ENCODE measurements at regions of chr13 and their contacts with region 1.

Region 1: GRCh38 chr13:41652727-41653361 is 195.5 kb downstream of the RGCC start:
- DNase-seq: peak; percentile 12 to 41
- H3K4me3 ChIP-seq: no peak overlapping the region
- H3K27ac ChIP-seq: no peak overlapping the region
- H3K4me1 ChIP-seq: peaks cover 21% of the 10 kb centered on the region
- H3K27me3 ChIP-seq: no peaks in the 10 kb centered on the region
- CTCF ChIP-seq: peak; percentile 77

Region 2: GRCh38 chr13:41075034-41075433 is 577.8 kb before region 1 on chr13:
- CTCF ChIA-PET with region 1: no interaction called
- POLR2A ChIA-PET with region 1: no interaction called
- intact Hi-C with region 1: loop called (anchors 2 kb)
- DNase-seq: peak in 1 of 2 experiments; percentile 6
- H3K4me3 ChIP-seq: no peak overlapping the region
- H3K27ac ChIP-seq: no peak overlapping the region
- H3K4me1 ChIP-seq: no peaks in the 10 kb centered on the region
- H3K27me3 ChIP-seq: no peaks in the 10 kb centered on the region
- CTCF ChIP-seq: peak; percentile 70

Region 3: GRCh38 chr13:41352935-41353840 is 299.7 kb before region 1 on chr13:
- CTCF ChIA-PET with region 1: no interaction called
- POLR2A ChIA-PET with region 1: no interaction called
- intact Hi-C with region 1: loop called (anchors 1 kb)
- DNase-seq: peak; percentile 38 to 53
- H3K4me3 ChIP-seq: no peak overlapping the region
- H3K27ac ChIP-seq: 0 out of 2 replicates have a peak overlapping the region, but pooled peaks have one; percentile 32
- H3K4me1 ChIP-seq: peaks cover 16% of the 10 kb centered on the region
- H3K27me3 ChIP-seq: no peaks in the 10 kb centered on the region
- CTCF ChIP-seq: peak; percentile 84

Region 4: DNA sequence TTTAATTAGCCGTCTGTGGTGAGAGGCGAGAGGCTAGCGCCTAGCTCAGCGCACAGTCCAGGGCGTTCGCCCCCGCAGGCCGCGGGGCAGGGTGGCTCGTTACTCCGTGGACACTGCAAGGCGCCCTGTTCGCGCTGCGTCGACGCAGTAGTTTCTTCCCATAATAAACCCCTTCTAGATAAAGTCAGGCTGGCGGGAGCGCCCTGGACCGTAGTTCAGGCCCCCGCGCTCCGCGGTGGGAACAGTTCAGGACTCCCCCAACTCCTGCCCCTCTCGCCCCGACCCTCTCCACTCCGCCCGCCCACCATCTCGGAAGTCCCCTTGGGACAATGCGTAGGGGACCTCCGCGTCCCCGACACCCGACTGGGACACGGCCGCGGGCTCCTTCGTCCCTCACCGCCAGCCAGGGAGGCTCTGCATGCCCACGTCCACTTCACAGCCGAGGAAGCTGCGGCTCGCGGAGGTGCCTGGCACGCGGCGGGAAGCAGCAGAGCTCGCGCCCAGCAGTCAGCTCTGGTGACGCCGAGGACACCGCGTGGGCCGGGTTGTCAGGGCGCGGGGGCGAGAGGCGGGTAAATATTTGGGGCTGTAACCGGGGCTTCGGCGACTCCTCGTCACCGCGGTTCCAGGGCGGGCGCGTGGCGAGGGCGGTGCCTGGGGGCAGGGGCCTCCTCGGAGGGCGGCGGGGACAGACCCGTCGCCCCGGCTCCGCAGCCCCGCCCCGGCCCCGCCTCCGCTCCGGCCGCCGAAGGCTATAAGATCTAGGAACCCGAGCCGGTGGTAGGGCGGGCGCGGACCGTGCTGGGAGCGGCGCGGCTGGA is 195.9 kb before region 1 on chr13 and contains the start of gene RGCC:
- CTCF ChIA-PET with region 1: interaction called, 4 read pairs
- POLR2A ChIA-PET with region 1: no interaction called
- intact Hi-C with region 1: loop called (anchors 2 kb)
- DNase-seq: peak; percentile 46 to 77
- H3K4me3 ChIP-seq: peak within 1 kb of the TSS; percentile 62
- H3K27ac ChIP-seq: no peak within 1 kb of the TSS
- H3K4me1 ChIP-seq: 0 out of 2 replicates have a peak, but pooled peaks cover 5% of the 10 kb centered on the region
- H3K27me3 ChIP-seq: peaks cover 14% of the 10 kb centered on the region; the same call in 1 of the 2 replicates
- CTCF ChIP-seq: no peak
- total RNA-seq, gene RGCC: 3.4 and 4.8 TPM in 2 replicates

Region 5: DNA sequence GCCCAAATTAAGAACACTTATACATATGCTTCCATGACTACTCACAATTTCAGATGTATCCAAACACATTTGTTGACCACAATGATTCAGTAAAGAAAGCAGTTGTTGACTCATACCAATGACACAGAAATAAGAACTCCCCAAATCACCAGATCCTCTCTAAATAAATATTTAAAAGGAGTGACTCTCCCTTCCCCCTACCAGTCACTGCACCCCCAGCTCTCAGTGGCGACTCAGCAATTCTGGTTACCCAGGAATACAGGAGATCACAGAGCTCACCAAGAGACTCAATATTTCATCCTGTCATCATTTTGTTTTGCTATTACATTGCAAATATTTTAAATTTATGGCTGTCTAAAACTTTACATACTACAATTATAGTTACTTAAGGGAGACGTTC is 63.9 kb before region 1 on chr13:
- CTCF ChIA-PET with region 1: interaction called, 3 read pairs
- POLR2A ChIA-PET with region 1: no interaction called
- intact Hi-C with region 1: loop called (anchors 2 kb)
- DNase-seq: peak; percentile 46 to 85
- H3K4me3 ChIP-seq: no peak overlapping the region
- H3K27ac ChIP-seq: peak overlapping the region; percentile 89
- H3K4me1 ChIP-seq: peaks cover 33% of the 10 kb centered on the region
- H3K27me3 ChIP-seq: no peaks in the 10 kb centered on the region
- CTCF ChIP-seq: no peak

Measured in PC-9 (cell line).